ENCODE measurements at regions of chr17 and their contacts with region 1.

Region 1: DNA sequence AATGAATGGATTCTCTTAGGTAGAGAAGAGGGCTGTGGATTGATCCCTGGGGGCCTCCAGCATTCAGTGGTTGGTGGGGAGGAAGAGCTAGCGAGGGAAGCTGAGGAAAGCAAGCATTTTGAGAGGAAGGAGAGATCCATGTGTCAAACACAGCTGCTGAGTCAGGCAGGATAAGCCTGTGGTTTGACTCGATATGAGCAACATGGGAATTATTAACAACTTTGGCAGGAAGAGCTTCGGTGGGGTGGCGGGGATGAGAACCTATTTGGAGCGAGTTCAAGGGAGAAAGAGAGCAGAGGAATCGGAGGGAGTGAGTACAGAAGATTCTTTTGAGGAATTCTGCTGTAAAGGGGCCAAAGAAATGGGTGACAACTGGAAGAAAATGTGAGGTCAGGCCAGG is 59.5 kb upstream of the CDC42EP4 start:
- DNase-seq: no peak

Region 2: GRCh38 chr17:73255671-73256181 is 115.6 kb before region 1 on chr17:
- intact Hi-C with region 1: loop called (anchors 1 kb)
- DNase-seq: peak in 8 of 10 donors; percentile 49 to 92 (median 74)

Measured in posterior cingulate gyrus (tissue), 11 donors.